ENCODE measurements at regions of chrX and their contacts with region 1.

Region 1: DNA sequence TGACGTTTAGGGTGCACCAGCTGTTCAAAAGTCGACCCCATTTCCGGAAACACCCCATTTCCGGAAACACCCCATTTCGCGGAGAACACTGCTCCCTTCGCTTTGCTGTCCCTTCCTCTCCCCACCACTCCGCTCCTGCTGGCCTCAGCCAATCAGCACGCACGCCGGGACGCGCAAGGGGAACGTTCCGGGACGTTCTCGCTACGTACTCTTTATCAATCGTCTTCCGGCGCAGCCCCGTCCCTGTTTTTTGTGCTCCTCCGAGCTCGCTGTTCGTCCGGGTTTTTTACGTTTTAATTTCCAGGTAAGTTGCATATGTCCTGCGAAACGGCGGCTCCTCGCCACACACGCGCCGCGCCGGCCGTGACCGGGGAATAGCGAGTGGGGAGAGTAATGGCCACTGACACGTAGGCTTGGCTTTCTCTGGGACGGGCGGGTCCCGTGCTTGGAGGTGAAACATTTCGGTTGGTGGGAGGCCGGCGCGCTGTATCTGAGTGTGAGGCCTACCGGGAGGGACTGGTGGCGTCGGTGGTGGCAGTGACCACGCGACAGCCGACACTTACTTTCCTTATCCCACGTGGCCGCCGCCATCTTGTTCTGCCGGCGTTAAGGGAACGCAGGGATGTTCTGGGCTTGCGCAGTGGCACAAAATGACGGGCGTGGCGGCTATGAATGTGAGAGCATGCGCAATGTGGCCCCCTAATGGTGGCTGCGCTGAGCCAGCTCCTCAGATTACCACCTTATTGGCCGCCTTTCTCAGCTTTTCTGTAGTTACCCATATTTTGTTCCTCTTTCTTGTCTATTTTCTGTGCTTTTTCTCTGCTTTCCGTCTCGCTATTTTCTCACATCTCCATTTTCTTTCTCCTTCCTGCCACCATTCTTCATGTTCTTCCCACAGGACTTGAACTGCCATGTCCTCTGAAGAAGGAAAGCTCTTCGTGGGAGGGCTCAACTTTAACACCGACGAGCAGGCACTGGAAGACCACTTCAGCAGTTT is at the start of gene RBM3:
- DNase-seq: peak; percentile 80 to 97 (median 92)
- ATAC-seq: peak; percentile 95
- H3K4me3 Mint-ChIP-seq: peak within 1 kb of the TSS; percentile 95 to 99 (median 98)
- H3K27ac Mint-ChIP-seq: peak within 1 kb of the TSS; percentile 98 to 100 (median 100)
- H3K4me1 Mint-ChIP-seq: peaks cover 4 to 31% (median 23%) of the 10 kb centered on the region in 4 donors
- H3K27me3 Mint-ChIP-seq: no peaks in the 10 kb centered on the region
- polyA plus RNA-seq, gene RBM3: 206 to 235 (median 235) TPM

Region 2: DNA sequence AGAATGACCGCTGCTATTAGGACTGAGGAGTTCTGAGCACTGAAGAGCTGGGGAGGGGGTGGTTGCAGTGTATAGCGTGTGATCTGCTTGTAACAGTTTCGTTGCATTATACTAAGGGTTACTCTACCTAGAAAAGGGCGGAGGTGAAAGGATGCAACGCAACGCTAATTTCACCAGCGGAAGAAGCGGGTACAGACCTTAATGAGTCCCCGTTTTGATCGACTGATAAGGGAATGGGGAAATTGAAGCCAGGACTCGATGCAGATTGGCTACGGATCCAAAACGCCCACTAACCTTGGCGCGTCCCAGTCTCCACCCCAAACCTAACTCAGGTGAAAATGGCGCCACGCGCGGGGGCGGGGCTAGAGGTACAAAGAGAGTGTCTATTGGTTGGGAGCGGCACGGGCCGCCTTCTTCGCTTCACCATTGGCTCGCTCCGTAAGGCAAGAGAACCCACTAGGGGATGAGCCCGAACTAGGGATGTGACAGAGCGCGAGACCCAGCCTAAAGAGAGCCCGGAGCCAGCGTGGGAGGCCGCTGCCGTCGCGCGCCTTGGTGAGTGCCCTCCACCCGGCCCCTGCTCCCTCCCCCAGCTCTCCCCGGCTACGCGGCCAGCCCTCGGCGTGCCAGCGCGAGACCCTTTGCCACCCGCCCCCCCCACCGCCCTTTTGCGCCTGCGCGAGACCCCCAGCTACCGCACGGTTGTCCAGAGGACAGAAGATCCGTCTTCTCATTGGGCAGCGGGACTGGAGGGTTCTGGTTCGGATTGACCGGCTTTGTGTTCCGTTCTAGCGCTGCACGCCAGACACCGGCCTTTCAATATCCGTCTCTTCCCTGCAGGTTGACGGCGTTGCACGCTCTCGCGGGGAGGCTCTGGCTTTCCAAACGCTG is 53.0 kb before region 1 on chrX and contains the start of gene EBP:
- POLR2A ChIA-PET with region 1: interaction called, 12 read pairs
- DNase-seq: peak; percentile 83 to 97 (median 92)
- ATAC-seq: peak; percentile 94 to 95
- H3K4me3 Mint-ChIP-seq: peak within 1 kb of the TSS; percentile 76 to 92 (median 88)
- H3K27ac Mint-ChIP-seq: peak within 1 kb of the TSS; percentile 89 to 97 (median 94)
- H3K4me1 Mint-ChIP-seq: peaks cover 13 to 39% (median 31%) of the 10 kb centered on the region in 4 donors
- H3K27me3 Mint-ChIP-seq: no peaks in the 10 kb centered on the region
- polyA plus RNA-seq, gene EBP: 77.0 to 88.8 (median 85.2) TPM

Region 3: GRCh38 chrX:48539345-48540027 is 35.1 kb before region 1 on chrX and contains the start of gene TBC1D25:
- POLR2A ChIA-PET with region 1: interaction called, 44 read pairs
- DNase-seq: peak; percentile 80 to 99 (median 96)
- ATAC-seq: peak; percentile 87 to 88
- H3K4me3 Mint-ChIP-seq: peak within 1 kb of the TSS; percentile 84 to 96 (median 87)
- H3K27ac Mint-ChIP-seq: peak within 1 kb of the TSS; percentile 66 to 99 (median 96)
- H3K4me1 Mint-ChIP-seq: peaks cover 12 to 23% (median 20%) of the 10 kb centered on the region in 4 donors
- H3K27me3 Mint-ChIP-seq: no peaks in the 10 kb centered on the region
- polyA plus RNA-seq, gene TBC1D25: 14.3 to 19.3 (median 18.0) TPM

Region 4: GRCh38 chrX:48597353-48598264 is 23.0 kb after region 1 on chrX and contains the start of gene WDR13:
- POLR2A ChIA-PET with region 1: interaction called, 11 read pairs
- DNase-seq: peak; percentile 84 to 96 (median 89)
- ATAC-seq: peak; percentile 83
- H3K4me3 Mint-ChIP-seq: peak within 1 kb of the TSS; percentile 94 to 98 (median 96)
- H3K27ac Mint-ChIP-seq: peak within 1 kb of the TSS; percentile 98 to 100 (median 99)
- H3K4me1 Mint-ChIP-seq: peaks cover 7 to 18% (median 9%) of the 10 kb centered on the region in 4 donors
- H3K27me3 Mint-ChIP-seq: peaks cover 0 to 2% (median 0%) of the 10 kb centered on the region in 5 donors
- polyA plus RNA-seq, gene WDR13: 32.2 to 45.5 (median 40.6) TPM

Region 5: GRCh38 chrX:48636776-48637175 is 62.2 kb after region 1 on chrX:
- POLR2A ChIA-PET with region 1: no interaction called
- DNase-seq: no peak
- ATAC-seq: no peak
- H3K4me3 Mint-ChIP-seq: no peak overlapping the region
- H3K27ac Mint-ChIP-seq: peak overlapping the region in 1 of 10 donors; percentile 25
- H3K4me1 Mint-ChIP-seq: peaks cover 0 to 11% (median 2%) of the 10 kb centered on the region in 4 donors
- H3K27me3 Mint-ChIP-seq: no peaks in the 10 kb centered on the region